Vagina (tissue), 2 donors: ENCODE measurements at regions of chr1 and their contacts with region 1.

Region 1: GRCh38 chr1:203388683-203389082 is 37.8 kb upstream of the FMOD start:
- DNase-seq: peak in 1 of 2 donors; percentile 56
- H3K4me3 ChIP-seq: no peak overlapping the region
- H3K27ac ChIP-seq: no peak overlapping the region
- H3K4me1 ChIP-seq: no peaks in the 10 kb centered on the region
- H3K27me3 ChIP-seq: no peaks in the 10 kb centered on the region
- CTCF ChIP-seq: no peak
- POLR2A ChIP-seq: no peak

Region 2: GRCh38 chr1:203448521-203449061 is 59.9 kb after region 1 on chr1:
- intact Hi-C with region 1: loop called (anchors 2 kb)
- DNase-seq: no peak
- H3K4me3 ChIP-seq: no peak overlapping the region
- H3K27ac ChIP-seq: peak overlapping the region; percentile 88
- H3K4me1 ChIP-seq: peaks cover 36% of the 10 kb centered on the region
- H3K27me3 ChIP-seq: no peaks in the 10 kb centered on the region
- CTCF ChIP-seq: no peak
- POLR2A ChIP-seq: peak in 1 of 2 donors; percentile 17